PC-9 (cell line): ENCODE measurements at regions of chr1 and their contacts with region 1.

Region 1: GRCh38 chr1:190578526-190578925 is 100.9 kb upstream of the BRINP3 start:
- DNase-seq: no peak
- H3K4me3 ChIP-seq: no peak overlapping the region
- H3K27ac ChIP-seq: no peak overlapping the region
- H3K4me1 ChIP-seq: no peaks in the 10 kb centered on the region
- H3K27me3 ChIP-seq: no peaks in the 10 kb centered on the region
- CTCF ChIP-seq: no peak

Region 2: GRCh38 chr1:190599688-190600087 is 21.2 kb after region 1 on chr1:
- CTCF ChIA-PET with region 1: interaction called, 12 read pairs
- POLR2A ChIA-PET with region 1: no interaction called
- intact Hi-C with region 1: no loop called
- DNase-seq: no peak
- H3K4me3 ChIP-seq: no peak overlapping the region
- H3K27ac ChIP-seq: no peak overlapping the region
- H3K4me1 ChIP-seq: no peaks in the 10 kb centered on the region
- H3K27me3 ChIP-seq: no peaks in the 10 kb centered on the region
- CTCF ChIP-seq: no peak

Region 3: GRCh38 chr1:190633488-190633887 is 55.0 kb after region 1 on chr1:
- CTCF ChIA-PET with region 1: no interaction called
- POLR2A ChIA-PET with region 1: no interaction called
- intact Hi-C with region 1: no loop called
- DNase-seq: no peak
- H3K4me3 ChIP-seq: no peak overlapping the region
- H3K27ac ChIP-seq: no peak overlapping the region
- H3K4me1 ChIP-seq: no peaks in the 10 kb centered on the region
- H3K27me3 ChIP-seq: no peaks in the 10 kb centered on the region
- CTCF ChIP-seq: no peak